ENCODE measurements at regions of chr5 and their contacts with region 1.

Region 1: GRCh38 chr5:103808464-103809106 is 246.0 kb upstream of the NUDT12 start:
- DNase-seq: no peak
- H3K4me3 ChIP-seq: no peak overlapping the region
- CTCF ChIP-seq: peak; percentile 84

Region 2: GRCh38 chr5:103582364-103582763 is 226.2 kb before region 1 on chr5:
- CTCF ChIA-PET with region 1: interaction called, 25 read pairs
- POLR2A ChIA-PET with region 1: no interaction called
- DNase-seq: no peak
- H3K4me3 ChIP-seq: no peak overlapping the region
- CTCF ChIP-seq: peak; percentile 36

Region 3: GRCh38 chr5:103847060-103847459 is 38.5 kb after region 1 on chr5:
- CTCF ChIA-PET with region 1: no interaction called
- POLR2A ChIA-PET with region 1: no interaction called
- DNase-seq: no peak
- H3K4me3 ChIP-seq: no peak overlapping the region
- CTCF ChIP-seq: no peak

Region 4: GRCh38 chr5:103938146-103938695 is 129.6 kb after region 1 on chr5:
- CTCF ChIA-PET with region 1: interaction called, 10 read pairs
- POLR2A ChIA-PET with region 1: no interaction called
- DNase-seq: no peak
- H3K4me3 ChIP-seq: no peak overlapping the region
- CTCF ChIP-seq: no peak

Region 5: DNA sequence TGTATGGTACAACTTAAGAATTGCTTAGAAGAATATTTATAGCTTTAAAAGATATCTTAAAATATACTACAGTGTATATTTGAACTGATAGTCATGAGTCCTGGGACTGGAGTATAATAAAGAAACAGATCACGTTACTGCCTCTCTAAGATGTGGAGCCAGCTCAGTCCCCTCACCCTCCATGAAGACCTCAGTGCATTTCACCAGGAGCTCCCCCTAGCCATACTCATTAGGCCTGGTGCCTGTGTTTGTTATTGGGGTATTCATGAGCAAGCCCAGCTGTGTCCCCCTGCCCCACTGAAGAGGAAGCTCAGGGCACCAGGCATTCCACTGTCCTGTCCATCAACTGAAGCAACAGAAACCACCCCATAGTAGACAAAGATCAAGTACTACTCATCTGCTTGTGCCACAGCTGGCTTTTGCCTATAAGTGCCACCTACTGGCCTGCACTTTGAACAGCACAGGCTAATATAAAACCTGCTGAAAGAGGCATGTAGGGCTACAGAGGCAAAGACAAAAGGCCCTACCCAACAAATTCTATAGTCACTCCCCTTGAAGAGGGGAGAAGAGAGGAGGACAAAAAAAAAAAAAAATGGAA is 604.2 kb after region 1 on chr5:
- CTCF ChIA-PET with region 1: interaction called, 31 read pairs
- POLR2A ChIA-PET with region 1: no interaction called
- DNase-seq: peak; percentile 10
- H3K4me3 ChIP-seq: no peak overlapping the region
- CTCF ChIP-seq: peak; percentile 73

Measured in AG04449 (cell line).